GM10248 (cell line): ENCODE measurements at regions of chr3 and their contacts with region 1.

Region 1: GRCh38 chr3:148991194-148992026 is at the start of gene GYG1:
- DNase-seq: peak; percentile 88
- CTCF ChIP-seq: peak; percentile 46

Region 2: GRCh38 chr3:149003653-149004305 is 12.4 kb after region 1 on chr3:
- CTCF ChIA-PET with region 1: interaction called, 25 read pairs
- POLR2A ChIA-PET with region 1: no interaction called
- DNase-seq: peak; percentile 29
- CTCF ChIP-seq: no peak

Region 3: GRCh38 chr3:149058602-149059001 is 67.2 kb after region 1 on chr3:
- CTCF ChIA-PET with region 1: no interaction called
- POLR2A ChIA-PET with region 1: no interaction called
- DNase-seq: peak; percentile 25
- CTCF ChIP-seq: no peak

Region 4: GRCh38 chr3:149120051-149120972 is 128.9 kb after region 1 on chr3:
- CTCF ChIA-PET with region 1: no interaction called
- POLR2A ChIA-PET with region 1: no interaction called
- DNase-seq: peak; percentile 67
- CTCF ChIP-seq: peak; percentile 68